MCF 10A (cell line): ENCODE measurements at regions of chr1 and their contacts with region 1.

Region 1: DNA sequence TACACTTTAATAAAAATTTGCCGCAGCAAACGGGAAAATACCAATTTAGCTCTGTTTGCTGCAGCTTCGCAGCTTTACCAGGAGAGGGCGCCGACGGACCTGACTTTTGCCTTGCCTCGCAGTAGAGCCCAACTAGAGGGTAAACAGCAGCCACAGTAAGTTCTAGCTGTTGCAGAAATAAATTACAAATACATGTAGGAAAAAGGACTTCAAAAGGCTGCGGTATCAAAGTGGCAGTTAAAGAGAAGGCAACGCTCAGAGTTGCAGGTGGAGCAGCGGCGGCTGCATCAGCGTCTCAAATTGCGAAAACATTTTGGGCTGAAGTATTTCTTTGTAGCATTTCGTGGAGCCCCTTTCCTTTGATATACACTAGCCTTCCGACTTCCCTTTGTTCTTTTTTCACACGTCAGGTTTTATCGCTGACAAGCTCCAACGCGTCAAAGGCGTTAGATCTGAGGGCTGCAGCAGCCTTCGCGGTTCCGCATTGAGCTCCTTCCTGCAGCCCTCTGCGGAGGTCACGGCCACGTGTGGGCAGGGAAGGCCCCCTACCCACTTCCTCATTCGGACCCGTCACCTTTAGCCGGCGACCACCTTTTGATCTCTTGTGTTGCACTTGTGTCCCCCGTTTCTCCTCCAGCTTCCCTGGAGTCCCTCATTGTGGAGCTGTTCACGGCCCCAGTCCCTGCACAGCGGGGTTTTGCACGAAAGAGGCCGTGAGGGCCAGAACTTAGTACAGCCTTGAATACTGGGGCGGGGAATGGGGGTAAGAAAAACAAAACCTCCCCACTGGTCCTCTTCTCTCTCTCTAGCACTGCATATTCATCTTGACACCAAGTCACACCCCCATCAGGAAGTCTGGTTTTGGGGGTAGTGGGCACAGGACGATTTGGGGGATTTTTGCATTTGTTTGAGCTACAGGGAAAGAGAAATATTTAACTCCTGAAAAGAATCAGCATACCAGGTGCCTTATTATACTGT is 72.8 kb downstream of the S1PR1 start:
- DNase-seq: peak; percentile 56
- H3K4me3 Mint-ChIP-seq: peak overlapping the region; percentile 56
- H3K27ac Mint-ChIP-seq: no peak overlapping the region
- H3K4me1 Mint-ChIP-seq: peaks cover 6% of the 10 kb centered on the region
- H3K27me3 Mint-ChIP-seq: peaks cover 79% of the 10 kb centered on the region
- CTCF ChIP-seq: peak; percentile 69

Region 2: DNA sequence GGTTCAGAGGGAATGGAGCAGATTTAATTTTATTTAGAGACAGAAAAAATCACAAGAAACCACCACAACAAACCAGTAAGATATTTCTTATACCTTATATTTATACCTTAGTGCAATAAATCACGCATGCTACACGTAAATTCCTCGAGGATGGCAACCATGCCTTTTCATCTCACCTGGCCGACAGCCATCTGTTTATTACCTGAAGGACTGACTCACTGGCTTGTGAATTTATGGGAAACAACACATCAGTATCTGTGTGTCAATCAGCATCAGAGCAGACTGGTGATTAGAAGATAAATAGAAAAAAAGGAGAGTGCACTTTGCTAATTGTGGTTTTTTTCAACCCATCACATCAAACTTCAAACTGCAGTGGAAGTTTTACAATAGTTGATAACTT is 14.4 kb before region 1 on chr1:
- CTCF ChIA-PET with region 1: interaction called, 29 read pairs
- POLR2A ChIA-PET with region 1: no interaction called
- intact Hi-C with region 1: no loop called
- DNase-seq: peak; percentile 49
- H3K4me3 Mint-ChIP-seq: no peak overlapping the region
- H3K27ac Mint-ChIP-seq: no peak overlapping the region
- H3K4me1 Mint-ChIP-seq: peaks cover 8% of the 10 kb centered on the region
- H3K27me3 Mint-ChIP-seq: peaks cover 26% of the 10 kb centered on the region
- CTCF ChIP-seq: no peak

Region 3: GRCh38 chr1:101344745-101345144 is 35.1 kb after region 1 on chr1:
- CTCF ChIA-PET with region 1: interaction called, 18 read pairs
- POLR2A ChIA-PET with region 1: interaction called, 3 read pairs
- intact Hi-C with region 1: no loop called
- DNase-seq: no peak
- H3K4me3 Mint-ChIP-seq: no peak overlapping the region
- H3K27ac Mint-ChIP-seq: no peak overlapping the region
- H3K4me1 Mint-ChIP-seq: no peaks in the 10 kb centered on the region
- H3K27me3 Mint-ChIP-seq: peaks cover 91% of the 10 kb centered on the region
- CTCF ChIP-seq: no peak

Region 4: GRCh38 chr1:101371259-101371658 is 61.6 kb after region 1 on chr1:
- CTCF ChIA-PET with region 1: interaction called, 20 read pairs
- POLR2A ChIA-PET with region 1: no interaction called
- intact Hi-C with region 1: no loop called
- DNase-seq: peak; percentile 84
- H3K4me3 Mint-ChIP-seq: no peak overlapping the region
- H3K27ac Mint-ChIP-seq: no peak overlapping the region
- H3K4me1 Mint-ChIP-seq: peaks cover 9% of the 10 kb centered on the region
- H3K27me3 Mint-ChIP-seq: no peaks in the 10 kb centered on the region
- CTCF ChIP-seq: no peak

Region 5: GRCh38 chr1:101438359-101438758 is 128.7 kb after region 1 on chr1:
- CTCF ChIA-PET with region 1: interaction called, 29 read pairs
- POLR2A ChIA-PET with region 1: no interaction called
- intact Hi-C with region 1: loop called (anchors 1 kb)
- DNase-seq: peak; percentile 50
- H3K4me3 Mint-ChIP-seq: no peak overlapping the region
- H3K27ac Mint-ChIP-seq: no peak overlapping the region
- H3K4me1 Mint-ChIP-seq: no peaks in the 10 kb centered on the region
- H3K27me3 Mint-ChIP-seq: peaks cover 80% of the 10 kb centered on the region
- CTCF ChIP-seq: peak; percentile 22